ENCODE measurements at regions of chr21 and their contacts with region 1.

Region 1: DNA sequence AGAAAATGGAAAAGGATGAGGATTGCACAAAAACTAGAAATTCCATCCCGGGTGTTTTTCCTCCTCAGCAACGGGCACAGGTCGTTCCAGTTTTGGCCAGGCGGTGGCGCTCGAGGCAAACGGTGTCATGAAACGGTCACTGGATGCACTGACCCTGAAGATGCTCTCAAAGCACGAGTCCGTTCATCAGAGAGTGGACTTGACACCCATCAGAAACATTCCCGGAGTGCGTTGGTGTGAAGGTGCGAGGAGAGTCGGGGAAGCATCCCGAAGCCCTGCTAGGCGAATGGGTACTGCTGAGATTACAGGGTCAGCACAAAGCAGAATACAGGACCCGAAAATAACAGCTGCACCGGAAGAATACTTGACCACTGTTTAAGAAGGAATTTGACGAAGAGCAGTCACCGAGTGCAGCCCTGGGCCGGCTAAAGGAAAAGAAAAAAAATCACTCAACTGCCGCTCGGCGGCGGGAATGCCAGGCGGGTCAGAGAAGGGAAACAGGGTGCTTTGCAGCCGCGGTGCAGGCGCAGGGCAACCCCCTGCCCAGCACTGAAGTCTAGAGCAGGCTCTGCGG is 71.7 kb upstream of the ETS2 start:
- DNase-seq: peak; percentile 76
- H3K4me3 Mint-ChIP-seq: peak overlapping the region; percentile 70
- H3K27ac Mint-ChIP-seq: no peak overlapping the region
- H3K4me1 Mint-ChIP-seq: peaks cover 10% of the 10 kb centered on the region
- H3K27me3 Mint-ChIP-seq: peaks cover 37% of the 10 kb centered on the region

Region 2: DNA sequence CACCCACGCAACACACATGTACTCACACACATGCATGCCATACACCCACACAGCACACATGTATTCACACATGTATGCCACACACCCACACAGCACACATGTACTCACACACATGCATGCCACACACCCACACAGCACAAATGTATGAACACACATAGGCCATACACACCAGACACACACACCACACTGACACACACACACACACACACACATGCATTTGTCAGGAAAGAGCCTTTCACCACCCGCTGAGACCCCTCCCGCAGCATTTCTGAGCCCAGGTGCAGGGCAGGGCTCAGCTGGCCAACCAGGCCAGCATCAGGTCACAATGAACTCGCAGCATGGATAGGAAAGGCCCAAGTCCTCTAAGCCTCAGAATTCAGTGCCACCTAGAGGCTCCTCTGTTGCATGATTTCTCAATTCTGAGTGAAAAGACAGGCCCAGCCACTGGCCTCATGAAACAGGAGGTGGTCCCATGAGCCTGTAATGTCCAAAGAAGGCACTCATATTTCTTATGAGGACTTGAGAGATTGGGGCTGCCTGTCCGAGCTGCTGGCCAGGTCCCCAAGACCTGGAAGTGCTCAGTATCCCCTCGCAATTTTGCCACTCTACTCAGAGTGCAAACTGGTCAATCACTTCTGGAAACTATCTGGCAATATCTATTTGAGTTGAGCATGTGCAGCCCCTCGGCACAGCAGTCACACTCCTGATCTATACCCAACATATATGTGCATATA is 391.9 kb after region 1 on chr21:
- CTCF ChIA-PET with region 1: interaction called, 10 read pairs
- DNase-seq: no peak
- H3K4me3 Mint-ChIP-seq: no peak overlapping the region
- H3K27ac Mint-ChIP-seq: no peak overlapping the region
- H3K4me1 Mint-ChIP-seq: peaks cover 6% of the 10 kb centered on the region
- H3K27me3 Mint-ChIP-seq: peaks cover 6% of the 10 kb centered on the region

Region 3: DNA sequence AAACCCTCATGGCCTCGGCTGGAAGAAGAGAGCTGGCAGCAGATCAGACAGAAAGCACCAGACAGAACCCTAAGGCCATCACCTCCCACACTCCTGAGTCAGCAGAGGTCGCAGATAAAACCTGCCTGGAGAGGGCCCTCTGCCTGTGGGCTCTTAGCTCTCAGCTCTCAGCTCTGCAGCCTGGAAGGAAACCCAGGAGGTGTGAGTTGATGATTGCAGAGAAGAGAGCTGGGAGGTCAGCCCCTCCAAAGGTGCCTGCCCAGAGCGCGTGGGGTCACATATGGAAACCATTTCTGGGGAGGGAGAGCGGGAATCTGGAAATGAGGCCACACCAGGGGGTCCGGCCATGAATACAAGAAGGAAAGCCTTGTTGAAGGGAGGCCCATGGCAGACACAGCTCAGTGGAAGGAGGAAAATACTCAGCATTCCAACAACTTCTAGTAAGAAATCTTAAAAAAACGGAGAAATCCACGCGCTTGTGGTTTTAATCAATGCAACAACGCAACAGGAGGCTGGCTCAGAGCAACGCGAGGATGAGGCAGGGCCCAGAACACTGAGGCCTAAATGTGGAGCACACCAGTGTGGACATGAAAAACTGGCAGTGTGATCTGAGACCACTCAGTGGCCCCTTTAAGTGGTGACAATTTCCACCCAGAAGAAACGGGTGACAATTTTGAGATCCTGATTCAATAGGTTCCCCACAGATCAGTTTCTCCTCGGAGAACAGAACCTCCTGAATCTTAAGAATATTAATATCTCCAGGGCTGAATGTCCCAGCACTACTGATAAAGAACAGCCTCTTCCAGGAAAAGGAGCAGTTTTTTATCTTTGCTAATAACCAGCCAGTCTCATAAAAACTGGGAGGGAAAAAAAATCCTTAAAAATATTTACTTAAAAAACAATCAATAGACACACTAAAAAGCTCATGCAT is 403.5 kb after region 1 on chr21:
- CTCF ChIA-PET with region 1: interaction called, 17 read pairs
- DNase-seq: no peak
- H3K4me3 Mint-ChIP-seq: no peak overlapping the region
- H3K27ac Mint-ChIP-seq: no peak overlapping the region
- H3K4me1 Mint-ChIP-seq: no peaks in the 10 kb centered on the region
- H3K27me3 Mint-ChIP-seq: peaks cover 5% of the 10 kb centered on the region